Activated CD4-positive, alpha-beta memory T cell treated with anti-CD3 and anti-CD28 coated beads for 36 hours (primary cell): ENCODE measurements at regions of chr3 and their contacts with region 1.

Region 1: GRCh38 chr3:16906682-16907081 is 21.9 kb downstream of the PLCL2 start:
- DNase-seq: peak; percentile 37
- H3K4me3 Mint-ChIP-seq: no peak overlapping the region
- H3K27ac Mint-ChIP-seq: no peak overlapping the region
- H3K4me1 Mint-ChIP-seq: peaks cover 79% of the 10 kb centered on the region
- H3K27me3 Mint-ChIP-seq: no peaks in the 10 kb centered on the region

Region 2: DNA sequence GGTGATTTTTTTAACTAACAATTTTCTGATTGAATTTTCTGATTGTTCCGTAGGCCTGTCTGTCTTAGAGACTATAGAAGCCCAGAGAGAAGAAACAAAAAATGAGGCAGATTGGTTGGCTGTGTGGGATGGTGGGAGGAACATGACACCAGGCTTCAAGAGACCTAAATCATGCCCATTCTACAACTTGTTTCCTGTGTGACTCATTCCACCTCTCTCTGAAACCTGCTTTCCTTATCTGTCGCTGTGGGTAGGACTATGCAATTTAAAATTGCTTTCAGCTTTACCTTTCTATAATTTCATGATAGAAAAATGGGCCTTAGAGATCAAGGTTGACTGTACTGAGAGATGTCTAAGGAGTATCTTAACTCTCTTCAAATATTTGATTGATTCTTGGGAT is 597.1 kb before region 1 on chr3:
- CTCF ChIA-PET with region 1: no interaction called
- POLR2A ChIA-PET with region 1: no interaction called
- intact Hi-C with region 1: loop called (anchors 5 kb)
- DNase-seq: peak; percentile 76
- H3K4me3 Mint-ChIP-seq: peak overlapping the region; percentile 33
- H3K27ac Mint-ChIP-seq: peak overlapping the region; percentile 84
- H3K4me1 Mint-ChIP-seq: peaks cover 91% of the 10 kb centered on the region
- H3K27me3 Mint-ChIP-seq: no peaks in the 10 kb centered on the region

Region 3: GRCh38 chr3:16849229-16849628 is 57.5 kb before region 1 on chr3:
- CTCF ChIA-PET with region 1: no interaction called
- POLR2A ChIA-PET with region 1: no interaction called
- intact Hi-C with region 1: loop called (anchors 2 kb)
- DNase-seq: peak; percentile 78
- H3K4me3 Mint-ChIP-seq: peak overlapping the region; percentile 57
- H3K27ac Mint-ChIP-seq: peak overlapping the region; percentile 16
- H3K4me1 Mint-ChIP-seq: peaks cover 49% of the 10 kb centered on the region
- H3K27me3 Mint-ChIP-seq: no peaks in the 10 kb centered on the region

Region 4: DNA sequence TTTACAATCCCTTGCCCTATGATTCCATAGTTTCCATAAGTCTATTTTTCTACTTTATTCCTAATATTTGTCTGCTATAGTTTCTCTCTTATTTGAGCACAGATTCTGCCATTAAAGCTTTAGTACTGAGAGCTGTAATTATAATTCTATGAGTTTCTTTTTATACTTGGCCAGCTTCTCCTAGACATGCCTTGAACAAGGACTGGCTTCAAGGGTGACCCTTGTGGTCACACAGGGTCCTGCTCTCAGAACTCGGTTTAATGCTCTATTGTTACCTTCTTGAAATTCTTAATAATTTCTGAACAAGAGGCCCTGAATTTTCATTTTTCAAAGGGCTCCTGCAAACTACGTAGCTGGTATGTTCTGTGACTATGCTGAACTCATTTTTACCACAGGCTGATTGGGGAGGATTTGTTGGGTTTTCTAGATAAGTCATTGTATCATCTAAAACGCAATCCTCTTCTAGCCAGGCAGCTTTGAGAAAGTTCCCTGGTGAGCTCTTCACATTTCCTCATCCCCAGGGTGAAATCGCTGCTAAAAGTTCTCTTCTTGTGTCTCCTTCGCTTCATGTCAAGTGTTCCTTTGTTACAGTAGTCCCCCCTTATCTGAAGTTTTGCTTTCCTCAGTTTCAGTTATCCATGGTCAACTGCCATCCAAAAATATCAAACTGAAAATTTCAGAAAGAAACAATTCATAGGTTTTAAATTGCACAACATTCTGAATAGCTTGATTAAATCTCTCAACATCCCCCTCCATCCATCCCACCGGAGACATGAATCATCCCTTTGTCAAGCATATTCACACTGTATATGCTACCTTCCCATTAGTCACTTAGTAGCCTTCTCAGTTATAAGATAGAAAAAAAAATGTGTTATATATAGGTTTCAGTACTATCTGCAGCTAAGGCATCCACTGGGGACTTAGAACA is 34.5 kb before region 1 on chr3:
- CTCF ChIA-PET with region 1: no interaction called
- POLR2A ChIA-PET with region 1: no interaction called
- intact Hi-C with region 1: no loop called
- DNase-seq: no peak
- H3K4me3 Mint-ChIP-seq: no peak overlapping the region
- H3K27ac Mint-ChIP-seq: no peak overlapping the region
- H3K4me1 Mint-ChIP-seq: peaks cover 2% of the 10 kb centered on the region
- H3K27me3 Mint-ChIP-seq: peaks cover 7% of the 10 kb centered on the region